Endothelial cell of umbilical vein (primary cell): ENCODE measurements at regions of chr9 and their contacts with region 1.

Region 1: DNA sequence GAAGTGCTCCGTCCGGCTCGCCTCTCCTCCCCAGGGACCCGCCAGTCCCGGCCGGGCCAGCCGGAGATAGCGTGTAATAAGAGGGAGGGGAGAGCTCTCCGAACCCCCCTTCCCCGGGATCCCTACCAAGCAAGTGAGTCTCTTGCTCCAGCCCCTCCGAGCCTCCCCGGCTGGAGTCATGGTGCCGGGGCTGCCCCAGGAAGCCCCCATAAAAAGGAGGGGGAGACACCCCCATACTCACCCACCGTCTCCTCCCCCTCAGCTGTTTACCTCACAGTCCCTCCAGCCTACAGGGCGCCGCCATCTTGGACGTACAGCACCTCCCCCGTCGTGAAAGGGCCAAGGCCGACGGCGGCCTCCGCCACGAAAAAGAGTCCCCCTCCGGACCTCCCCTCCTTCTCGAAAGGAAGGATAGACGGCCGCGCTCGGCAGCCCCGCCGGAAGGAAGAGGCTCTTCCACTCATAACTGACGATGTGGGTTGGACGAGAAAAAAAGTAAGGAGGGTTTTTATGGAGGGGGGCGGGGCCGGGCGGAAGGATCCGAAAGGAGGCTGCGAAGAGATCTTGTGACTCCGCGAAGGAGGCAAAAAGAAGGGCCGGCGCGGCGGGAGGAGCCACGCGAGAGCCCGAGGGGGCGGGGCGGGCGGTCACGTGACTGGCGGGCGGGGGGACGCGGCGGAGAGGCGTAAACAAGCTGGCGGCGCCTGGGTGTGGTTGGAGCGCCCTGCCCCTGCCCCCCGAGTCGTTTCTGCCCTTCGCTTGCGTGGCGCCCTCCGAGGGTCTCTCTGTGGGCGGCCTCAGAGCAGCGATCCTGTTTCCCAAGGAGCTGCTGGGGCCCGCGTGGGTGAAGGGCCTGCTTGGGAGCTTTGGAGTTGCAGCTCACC is at the start of gene TSC1:
- DNase-seq: peak; percentile 96
- H3K4me3 ChIP-seq: peak within 1 kb of the TSS; percentile 88 to 100 (median 90)
- H3K27ac ChIP-seq: peak within 1 kb of the TSS; percentile 99
- H3K4me1 ChIP-seq: peaks cover 8% of the 10 kb centered on the region
- H3K27me3 ChIP-seq: no peaks in the 10 kb centered on the region
- CTCF ChIP-seq: no peak
- POLR2A ChIP-seq: peak; percentile 73
- total RNA-seq, gene TSC1: 47.6 and 51.2 TPM in 2 replicates

Region 2: DNA sequence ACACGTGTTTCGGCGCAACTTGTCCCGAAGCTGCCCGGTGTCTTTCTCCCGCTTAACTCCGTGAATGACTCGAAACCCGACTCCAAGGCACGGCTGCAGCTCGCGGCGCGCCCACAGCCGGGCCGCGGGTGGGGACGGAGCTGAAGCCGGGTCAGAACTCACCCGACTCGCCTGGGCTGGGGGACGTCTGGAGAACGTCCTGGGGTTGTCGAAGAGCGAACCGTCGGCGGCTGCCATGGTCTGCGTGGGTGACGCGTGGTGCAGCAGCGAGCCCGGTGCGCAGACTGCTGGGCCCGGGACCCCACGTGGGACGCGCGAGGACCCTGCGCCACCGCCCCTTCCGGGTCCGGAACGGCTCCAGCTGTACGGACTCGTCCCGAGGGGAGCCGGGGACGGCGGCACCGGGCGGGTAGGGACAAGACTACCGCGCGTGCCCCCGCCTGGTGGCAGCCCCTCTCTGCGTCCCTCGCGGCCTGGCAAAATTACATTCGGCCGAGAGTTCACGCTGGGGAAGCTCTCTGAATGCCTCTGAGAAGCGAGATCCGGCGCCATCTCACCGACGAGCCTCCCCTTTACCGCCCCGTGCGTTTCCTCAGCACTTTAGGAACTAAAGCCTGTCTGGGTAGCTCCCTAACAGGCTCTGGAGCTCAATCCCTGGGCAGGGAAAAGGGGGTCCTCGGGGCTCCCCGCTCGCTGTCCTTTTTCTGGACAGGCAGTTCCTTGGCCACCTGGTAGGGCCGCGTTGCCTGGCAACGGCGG is 274.7 kb before region 1 on chr9 and contains the start of gene DDX31:
- CTCF ChIA-PET with region 1: no interaction called
- POLR2A ChIA-PET with region 1: no interaction called
- dilution Hi-C with region 1: no loop called
- intact Hi-C with region 1: loop called (anchors 10 kb)
- DNase-seq: peak; percentile 78
- H3K4me3 ChIP-seq: peak within 1 kb of the TSS; percentile 74 to 92 (median 78)
- H3K27ac ChIP-seq: peak within 1 kb of the TSS; percentile 90
- H3K4me1 ChIP-seq: peaks cover 21% of the 10 kb centered on the region
- H3K27me3 ChIP-seq: no peaks in the 10 kb centered on the region
- CTCF ChIP-seq: peak in 1 of 2 donors; percentile 3
- POLR2A ChIP-seq: peak; percentile 81
- total RNA-seq, gene DDX31: 16.3 and 16.4 TPM in 2 replicates

Region 3: GRCh38 chr9:132877824-132878694 is 66.5 kb before region 1 on chr9 and contains the start of gene AK8:
- CTCF ChIA-PET with region 1: no interaction called
- POLR2A ChIA-PET with region 1: no interaction called
- dilution Hi-C with region 1: no loop called
- intact Hi-C with region 1: loop called (anchors 2 kb)
- DNase-seq: peak; percentile 67
- H3K4me3 ChIP-seq: peak within 1 kb of the TSS; percentile 80 to 99 (median 96)
- H3K27ac ChIP-seq: peak within 1 kb of the TSS; percentile 74
- H3K4me1 ChIP-seq: peaks cover 2% of the 10 kb centered on the region
- H3K27me3 ChIP-seq: peaks cover 0 to 3% of the 10 kb centered on the region in 2 experiments
- CTCF ChIP-seq: no peak
- POLR2A ChIP-seq: no peak
- total RNA-seq, gene AK8: 0.32 TPM in 1 of 2 replicates, not detected in the other